ENCODE measurements at regions of chr15 and their contacts with region 1.

Region 1: DNA sequence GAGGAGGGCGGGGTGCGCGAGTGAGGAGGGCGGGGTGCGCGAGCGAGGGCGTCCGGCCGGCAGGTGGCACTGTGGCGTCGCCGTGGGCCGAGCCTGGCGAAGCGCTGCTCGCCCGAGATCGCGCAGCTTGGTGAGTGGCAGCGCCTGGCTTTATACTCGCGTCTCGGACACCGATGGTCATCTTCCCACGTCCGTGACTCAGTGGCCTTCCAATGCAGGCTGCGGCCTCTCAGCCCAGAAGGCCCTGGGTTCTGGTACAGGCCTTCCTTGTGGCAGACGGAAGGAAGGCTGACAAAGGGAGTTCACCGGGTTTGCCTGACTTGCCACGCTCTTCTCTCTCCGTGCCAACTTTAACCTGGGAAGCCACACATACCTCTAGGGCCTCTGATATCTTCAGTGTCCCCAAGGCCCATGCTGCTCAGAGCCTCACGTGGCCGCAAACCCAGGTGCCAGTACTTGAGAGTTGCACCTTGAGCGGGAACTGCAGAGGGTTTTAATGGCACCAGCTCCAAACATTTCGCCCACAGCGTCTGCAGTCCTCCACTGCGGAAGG is 195.3 kb upstream of the LYSMD4 start:
- DNase-seq: peak; percentile 79 to 95 (median 89)
- ATAC-seq: peak; percentile 92
- H3K4me3 ChIP-seq: peak overlapping the region; percentile 63 to 64
- H3K4me3 Mint-ChIP-seq: peak overlapping the region; percentile 83
- H3K27ac ChIP-seq: peak overlapping the region; percentile 34 to 72
- H3K27ac Mint-ChIP-seq: peak overlapping the region; percentile 87
- H3K4me1 ChIP-seq: peaks cover 18% of the 10 kb centered on the region
- H3K4me1 Mint-ChIP-seq: peaks cover 20% of the 10 kb centered on the region
- H3K27me3 ChIP-seq: no peaks in the 10 kb centered on the region
- H3K27me3 Mint-ChIP-seq: peaks cover 3% of the 10 kb centered on the region
- CTCF ChIP-seq: peak; percentile 59

Region 2: DNA sequence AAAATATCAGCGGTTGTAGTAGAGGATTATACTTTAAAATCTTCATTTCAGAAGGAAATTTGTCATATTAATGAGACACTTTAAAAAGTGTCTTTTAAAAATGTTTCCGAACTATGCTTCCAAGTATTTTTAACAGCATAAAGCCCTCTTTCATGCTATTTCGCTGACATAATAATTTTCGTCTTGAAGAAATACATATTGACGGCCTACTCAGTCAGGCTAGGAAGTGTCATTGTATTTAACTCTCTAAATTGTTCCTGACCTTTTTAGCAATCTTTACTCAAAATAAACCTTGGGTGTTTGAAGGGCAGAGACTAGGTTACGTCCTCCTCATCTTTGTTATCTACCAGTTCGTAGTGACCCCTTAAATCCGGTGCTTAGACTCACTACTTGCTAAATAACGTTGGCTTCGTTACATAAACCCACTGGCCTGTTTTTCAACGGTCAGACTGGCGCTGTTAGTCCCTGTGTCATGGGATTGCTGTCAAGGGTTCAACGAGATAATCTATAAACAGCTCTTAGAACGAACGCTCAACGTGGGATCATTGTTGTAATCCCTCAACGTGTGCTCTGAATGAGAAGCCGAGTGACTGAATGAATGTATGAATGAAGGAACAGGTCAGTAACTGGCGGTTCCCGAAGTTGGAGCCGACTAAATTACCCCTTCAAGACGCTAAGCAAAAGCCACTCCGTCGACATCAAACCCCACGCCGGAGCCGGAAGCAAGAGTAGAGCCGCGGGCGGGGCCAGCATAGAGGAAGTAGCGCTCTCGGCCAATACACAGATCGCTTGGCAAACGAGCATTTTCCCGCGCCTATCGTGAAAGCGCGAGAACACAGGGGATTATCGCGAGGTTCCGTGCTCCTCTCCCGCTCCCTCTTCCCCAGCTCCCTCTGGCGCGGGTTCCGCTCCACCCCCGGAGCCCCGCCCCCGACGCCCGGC is 677.7 kb before region 1 on chr15:
- CTCF ChIA-PET with region 1: no interaction called
- POLR2A ChIA-PET with region 1: no interaction called
- intact Hi-C with region 1: loop called (anchors 5 kb)
- DNase-seq: peak; percentile 83 to 98 (median 92)
- ATAC-seq: peak; percentile 95
- H3K4me3 ChIP-seq: peak overlapping the region; percentile 55 to 59
- H3K4me3 Mint-ChIP-seq: peak overlapping the region; percentile 90
- H3K27ac ChIP-seq: peak overlapping the region; percentile 25 to 79
- H3K27ac Mint-ChIP-seq: peak overlapping the region; percentile 89
- H3K4me1 ChIP-seq: peaks cover 19% of the 10 kb centered on the region
- H3K4me1 Mint-ChIP-seq: peaks cover 29% of the 10 kb centered on the region
- H3K27me3 ChIP-seq: no peaks in the 10 kb centered on the region
- H3K27me3 Mint-ChIP-seq: no peaks in the 10 kb centered on the region
- CTCF ChIP-seq: no peak

Region 3: DNA sequence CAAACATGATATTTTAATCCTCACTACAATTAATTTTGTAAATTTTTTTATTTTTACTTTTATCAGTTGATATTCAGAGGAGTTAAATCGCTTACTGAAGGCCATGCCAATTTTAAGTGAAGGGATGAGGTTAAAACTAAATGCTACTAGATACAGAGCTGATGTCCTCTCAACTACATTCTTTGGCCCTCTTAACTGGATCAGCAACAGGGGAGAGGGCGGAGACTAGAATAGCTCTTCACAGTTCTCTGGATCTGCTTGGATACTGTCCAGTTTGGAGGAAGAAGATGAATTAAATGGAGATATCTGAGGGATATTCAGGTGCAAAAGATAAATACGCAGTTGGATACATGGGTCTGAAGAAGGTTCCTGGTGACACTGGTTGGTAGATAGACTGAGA is 109.6 kb before region 1 on chr15:
- CTCF ChIA-PET with region 1: no interaction called
- POLR2A ChIA-PET with region 1: no interaction called
- intact Hi-C with region 1: loop called in 1 of 2 experiments (anchors 10 kb)
- DNase-seq: no peak
- ATAC-seq: no peak
- H3K4me3 ChIP-seq: no peak overlapping the region
- H3K4me3 Mint-ChIP-seq: no peak overlapping the region
- H3K27ac ChIP-seq: no peak overlapping the region
- H3K27ac Mint-ChIP-seq: no peak overlapping the region
- H3K4me1 ChIP-seq: no peaks in the 10 kb centered on the region
- H3K4me1 Mint-ChIP-seq: no peaks in the 10 kb centered on the region
- H3K27me3 ChIP-seq: no peaks in the 10 kb centered on the region
- H3K27me3 Mint-ChIP-seq: no peaks in the 10 kb centered on the region
- CTCF ChIP-seq: no peak

Region 4: GRCh38 chr15:100572362-100572983 is 644.0 kb after region 1 on chr15:
- CTCF ChIA-PET with region 1: interaction called, 6 read pairs
- POLR2A ChIA-PET with region 1: no interaction called
- intact Hi-C with region 1: loop called (anchors 2 kb)
- DNase-seq: peak in 2 of 9 experiments; percentile 26 to 51
- ATAC-seq: peak; percentile 58
- H3K4me3 ChIP-seq: no peak overlapping the region
- H3K4me3 Mint-ChIP-seq: peak overlapping the region; percentile 64
- H3K27ac ChIP-seq: peak overlapping the region in 1 of 2 experiments; percentile 6
- H3K27ac Mint-ChIP-seq: peak overlapping the region; percentile 93
- H3K4me1 ChIP-seq: peaks cover 26% of the 10 kb centered on the region
- H3K4me1 Mint-ChIP-seq: peaks cover 56% of the 10 kb centered on the region
- H3K27me3 ChIP-seq: no peaks in the 10 kb centered on the region
- H3K27me3 Mint-ChIP-seq: no peaks in the 10 kb centered on the region
- CTCF ChIP-seq: peak; percentile 80

Region 5: GRCh38 chr15:101008158-101009139 is 1079.9 kb after region 1 on chr15:
- CTCF ChIA-PET with region 1: no interaction called
- POLR2A ChIA-PET with region 1: no interaction called
- intact Hi-C with region 1: loop called in 1 of 2 experiments (anchors 5 kb)
- DNase-seq: peak; percentile 74 to 92 (median 86)
- ATAC-seq: peak; percentile 98
- H3K4me3 ChIP-seq: peak overlapping the region; percentile 73 to 81
- H3K4me3 Mint-ChIP-seq: peak overlapping the region; percentile 88
- H3K27ac ChIP-seq: no peak overlapping the region
- H3K27ac Mint-ChIP-seq: peak overlapping the region; percentile 60
- H3K4me1 ChIP-seq: peaks cover 13% of the 10 kb centered on the region
- H3K4me1 Mint-ChIP-seq: peaks cover 19% of the 10 kb centered on the region
- H3K27me3 ChIP-seq: peaks cover 0 to 3% of the 10 kb centered on the region in 2 experiments
- H3K27me3 Mint-ChIP-seq: no peaks in the 10 kb centered on the region
- CTCF ChIP-seq: peak; percentile 96

Region 6: GRCh38 chr15:101723874-101724674 is 1795.6 kb after region 1 on chr15 and contains the start of gene TARS3:
- CTCF ChIA-PET with region 1: no interaction called
- POLR2A ChIA-PET with region 1: no interaction called
- intact Hi-C with region 1: loop called in 1 of 2 experiments (anchors 5 kb)
- DNase-seq: peak; percentile 94 to 98 (median 96)
- ATAC-seq: peak; percentile 93
- H3K4me3 ChIP-seq: peak within 1 kb of the TSS; percentile 40 to 71
- H3K4me3 Mint-ChIP-seq: peak within 1 kb of the TSS; percentile 90
- H3K27ac ChIP-seq: peak within 1 kb of the TSS; percentile 65 to 87
- H3K27ac Mint-ChIP-seq: peak within 1 kb of the TSS; percentile 90
- H3K4me1 ChIP-seq: peaks cover 18% of the 10 kb centered on the region
- H3K4me1 Mint-ChIP-seq: peaks cover 35% of the 10 kb centered on the region
- H3K27me3 ChIP-seq: no peaks in the 10 kb centered on the region
- H3K27me3 Mint-ChIP-seq: no peaks in the 10 kb centered on the region
- CTCF ChIP-seq: no peak
- total RNA-seq, gene TARS3: 12.7 to 13.7 TPM

Measured in CD8-positive, alpha-beta T cell (primary cell).